ENCODE measurements at regions of chr1 and their contacts with region 1.

Region 1: GRCh38 chr1:161045750-161046571 is at the start of gene USF1:
- DNase-seq: peak; percentile 84 to 96 (median 93)
- ATAC-seq: peak; percentile 89
- H3K4me3 ChIP-seq: peak within 1 kb of the TSS; percentile 93
- H3K4me3 Mint-ChIP-seq: peak within 1 kb of the TSS; percentile 93 to 100 (median 97)
- H3K27ac ChIP-seq: peak within 1 kb of the TSS; percentile 92
- H3K27ac Mint-ChIP-seq: peak within 1 kb of the TSS; percentile 92 to 100 (median 99)
- H3K4me1 ChIP-seq: peaks cover 17 to 23% of the 10 kb centered on the region in 2 donors
- H3K4me1 Mint-ChIP-seq: peaks cover 41 to 54% (median 49%) of the 10 kb centered on the region in 7 donors
- H3K27me3 ChIP-seq: no peaks in the 10 kb centered on the region
- H3K27me3 Mint-ChIP-seq: no peaks in the 10 kb centered on the region
- total RNA-seq, gene USF1: 71.6 to 115 (median 91.7) TPM

Region 2: GRCh38 chr1:161021165-161021960 is 24.6 kb before region 1 on chr1:
- CTCF ChIA-PET with region 1: interaction called, 6 read pairs
- POLR2A ChIA-PET with region 1: interaction called, 45 read pairs
- intact Hi-C with region 1: loop called (anchors 1 kb)
- DNase-seq: peak; percentile 72 to 97 (median 88)
- ATAC-seq: peak; percentile 98
- H3K4me3 ChIP-seq: peak overlapping the region; percentile 75
- H3K4me3 Mint-ChIP-seq: peak overlapping the region; percentile 87 to 97 (median 91)
- H3K27ac ChIP-seq: peak overlapping the region; percentile 72
- H3K27ac Mint-ChIP-seq: peak overlapping the region; percentile 79 to 96 (median 93)
- H3K4me1 ChIP-seq: peaks cover 11 to 17% of the 10 kb centered on the region in 2 donors
- H3K4me1 Mint-ChIP-seq: peaks cover 24 to 50% (median 48%) of the 10 kb centered on the region in 7 donors
- H3K27me3 ChIP-seq: no peaks in the 10 kb centered on the region
- H3K27me3 Mint-ChIP-seq: no peaks in the 10 kb centered on the region

Region 3: GRCh38 chr1:161117759-161118581 is 72.0 kb after region 1 on chr1 and contains the starts of genes NIT1 and PFDN2:
- CTCF ChIA-PET with region 1: no interaction called
- POLR2A ChIA-PET with region 1: interaction called, 17 read pairs
- intact Hi-C with region 1: loop called (anchors 1 kb)
- DNase-seq: peak; percentile 76 to 90 (median 85)
- ATAC-seq: peak; percentile 86
- H3K4me3 ChIP-seq: peak within 1 kb of the TSS; percentile 99
- H3K4me3 Mint-ChIP-seq: peak within 1 kb of the TSS; percentile 92 to 99 (median 95)
- H3K27ac ChIP-seq: peak within 1 kb of the TSS; percentile 92
- H3K27ac Mint-ChIP-seq: peak within 1 kb of the TSS; percentile 57 to 99 (median 93)
- H3K4me1 ChIP-seq: peaks cover 31 to 35% of the 10 kb centered on the region in 2 donors
- H3K4me1 Mint-ChIP-seq: peaks cover 44 to 82% (median 78%) of the 10 kb centered on the region in 7 donors
- H3K27me3 ChIP-seq: no peaks in the 10 kb centered on the region
- H3K27me3 Mint-ChIP-seq: no peaks in the 10 kb centered on the region
- total RNA-seq, gene NIT1: 23.3 to 49.6 (median 41.8) TPM
- total RNA-seq, gene PFDN2: 32.0 to 67.9 (median 34.0) TPM

Region 4: GRCh38 chr1:161139765-161140164 is 93.8 kb after region 1 on chr1:
- CTCF ChIA-PET with region 1: interaction called, 5 read pairs
- POLR2A ChIA-PET with region 1: interaction called, 13 read pairs
- intact Hi-C with region 1: loop called in 1 of 2 experiments (anchors 1 kb)
- DNase-seq: peak in 5 of 9 donors; percentile 40 to 58 (median 50)
- ATAC-seq: peak; percentile 73
- H3K4me3 ChIP-seq: no peak overlapping the region
- H3K4me3 Mint-ChIP-seq: no peak overlapping the region
- H3K27ac ChIP-seq: no peak overlapping the region
- H3K27ac Mint-ChIP-seq: peak overlapping the region in 1 of 9 donors; percentile 54
- H3K4me1 ChIP-seq: no peaks in the 10 kb centered on the region
- H3K4me1 Mint-ChIP-seq: peaks cover 4 to 17% (median 10%) of the 10 kb centered on the region in 7 donors
- H3K27me3 ChIP-seq: no peaks in the 10 kb centered on the region
- H3K27me3 Mint-ChIP-seq: no peaks in the 10 kb centered on the region

Region 5: GRCh38 chr1:161408429-161409052 is 362.6 kb after region 1 on chr1:
- CTCF ChIA-PET with region 1: no interaction called
- POLR2A ChIA-PET with region 1: no interaction called
- intact Hi-C with region 1: no loop called
- DNase-seq: no peak
- ATAC-seq: no peak
- H3K4me3 ChIP-seq: no peak overlapping the region
- H3K4me3 Mint-ChIP-seq: no peak overlapping the region
- H3K27ac ChIP-seq: no peak overlapping the region
- H3K27ac Mint-ChIP-seq: peak overlapping the region in 1 of 9 donors; percentile 86
- H3K4me1 ChIP-seq: peaks cover 0 to 11% of the 10 kb centered on the region in 2 donors
- H3K4me1 Mint-ChIP-seq: peaks cover 15 to 36% (median 18%) of the 10 kb centered on the region in 7 donors
- H3K27me3 ChIP-seq: no peaks in the 10 kb centered on the region
- H3K27me3 Mint-ChIP-seq: peaks cover 5 to 10% (median 8%) of the 10 kb centered on the region in 5 donors

Measured in naive thymus-derived CD4-positive, alpha-beta T cell (primary cell).